ENCODE measurements at regions of chr19 and their contacts with region 1.

Region 1: GRCh38 chr19:17703824-17704463 is 15.3 kb upstream of the MAP1S start:
- DNase-seq: peak; percentile 32
- H3K4me3 ChIP-seq: no peak overlapping the region
- H3K27ac ChIP-seq: no peak overlapping the region
- H3K4me1 ChIP-seq: no peaks in the 10 kb centered on the region
- H3K27me3 ChIP-seq: no peaks in the 10 kb centered on the region
- CTCF ChIP-seq: peak; percentile 59 to 83

Region 2: GRCh38 chr19:17517898-17518297 is 186.0 kb before region 1 on chr19:
- CTCF ChIA-PET with region 1: no interaction called
- dilution Hi-C with region 1: no loop called
- in situ Hi-C with region 1: no loop called
- intact Hi-C with region 1: no loop called
- DNase-seq: no peak
- H3K4me3 ChIP-seq: no peak overlapping the region
- H3K27ac ChIP-seq: no peak overlapping the region
- H3K4me1 ChIP-seq: peaks cover 10% of the 10 kb centered on the region
- H3K27me3 ChIP-seq: no peaks in the 10 kb centered on the region
- CTCF ChIP-seq: no peak

Region 3: GRCh38 chr19:17739121-17739875 is 35.4 kb after region 1 on chr19:
- CTCF ChIA-PET with region 1: interaction called, 12 read pairs
- dilution Hi-C with region 1: no loop called
- in situ Hi-C with region 1: no loop called
- intact Hi-C with region 1: no loop called
- DNase-seq: no peak
- H3K4me3 ChIP-seq: no peak overlapping the region
- H3K27ac ChIP-seq: no peak overlapping the region
- H3K4me1 ChIP-seq: no peaks in the 10 kb centered on the region
- H3K27me3 ChIP-seq: no peaks in the 10 kb centered on the region
- CTCF ChIP-seq: no peak

Region 4: GRCh38 chr19:17775245-17775916 is 71.4 kb after region 1 on chr19:
- CTCF ChIA-PET with region 1: no interaction called
- dilution Hi-C with region 1: no loop called
- in situ Hi-C with region 1: no loop called
- intact Hi-C with region 1: loop called (anchors 2 kb)
- DNase-seq: no peak
- H3K4me3 ChIP-seq: no peak overlapping the region
- H3K27ac ChIP-seq: no peak overlapping the region
- H3K4me1 ChIP-seq: peaks cover 10% of the 10 kb centered on the region
- H3K27me3 ChIP-seq: no peaks in the 10 kb centered on the region
- CTCF ChIP-seq: peak; percentile 68 to 74

Measured in mammary epithelial cell (primary cell).